Right ventricle myocardium superior (tissue), 1 donor: ENCODE measurements at regions of chr5 and their contacts with region 1.

Region 1: GRCh38 chr5:96624636-96625035 is 37.5 kb upstream of the CAST start:
- DNase-seq: no peak
- ATAC-seq: no peak

Region 2: DNA sequence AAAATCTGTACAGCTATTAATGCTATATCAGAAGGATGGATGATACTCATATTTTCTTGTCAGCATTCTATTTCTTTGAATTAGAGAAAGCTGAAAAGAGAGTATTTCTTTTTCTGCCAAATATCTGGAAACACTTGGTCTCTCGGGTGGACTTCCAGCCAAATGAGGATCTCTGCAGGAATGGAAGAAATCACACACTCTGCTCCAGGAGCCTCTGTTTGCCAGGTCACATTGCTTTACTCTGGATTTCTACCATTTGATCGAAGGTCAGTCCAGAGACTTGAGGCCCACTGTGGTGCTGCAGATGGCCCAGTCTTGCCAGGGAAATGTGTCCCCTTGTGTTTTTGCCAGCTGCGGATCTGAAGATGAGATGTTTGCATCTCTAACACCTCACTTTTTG is 345.7 kb before region 1 on chr5:
- intact Hi-C with region 1: no loop called
- DNase-seq: no peak
- ATAC-seq: no peak

Region 3: GRCh38 chr5:96687812-96688453 is 63.3 kb after region 1 on chr5:
- intact Hi-C with region 1: loop called (anchors 5 kb)
- DNase-seq: no peak
- ATAC-seq: peak; percentile 70